Cardiac septum (tissue), 1 donor: ENCODE measurements at regions of chrX and their contacts with region 1.

Region 1: DNA sequence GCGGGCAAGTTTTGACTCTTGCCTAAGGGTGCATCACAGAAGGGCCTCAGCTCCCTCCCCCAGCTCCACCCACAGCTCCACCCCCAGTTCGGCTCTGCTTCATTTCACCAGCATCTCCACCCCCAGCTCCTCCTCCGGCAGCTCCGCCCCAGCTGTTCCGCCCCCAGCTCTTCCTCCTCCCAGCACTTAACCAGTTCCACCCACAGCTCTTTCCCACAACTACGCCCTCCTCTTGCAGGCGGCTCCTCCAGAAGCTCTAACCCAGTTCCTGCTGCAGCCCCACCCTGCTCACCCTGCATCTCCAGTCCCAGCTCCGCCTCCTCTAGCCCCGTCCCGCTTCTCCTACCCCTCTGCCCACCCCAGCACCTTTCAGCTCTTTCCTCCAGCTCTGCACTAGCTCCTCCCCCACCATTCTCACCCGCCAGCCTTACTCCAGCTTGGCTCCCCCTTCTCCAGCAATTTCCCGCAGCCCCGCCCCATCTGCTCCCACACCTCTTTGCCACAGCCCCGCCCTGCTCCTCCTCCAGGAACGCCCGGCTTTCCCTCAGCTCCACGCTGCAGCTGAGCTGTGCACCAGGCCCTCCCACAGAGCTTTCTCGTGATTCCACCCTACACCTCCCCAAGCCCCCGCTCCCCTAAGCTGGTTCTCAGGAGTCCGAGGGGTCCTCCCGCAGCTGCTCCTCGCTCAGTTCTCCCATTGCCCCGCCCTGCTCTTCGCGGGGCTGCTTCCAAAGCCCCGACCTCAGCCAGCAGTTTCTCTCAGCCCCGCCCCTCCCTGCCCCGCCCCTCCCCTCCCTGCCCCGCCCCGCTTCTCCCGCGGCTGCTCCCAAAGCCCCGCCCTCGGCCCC is 1.3 kb upstream of the EOLA1 start:
- DNase-seq: peak; percentile 95

Region 2: DNA sequence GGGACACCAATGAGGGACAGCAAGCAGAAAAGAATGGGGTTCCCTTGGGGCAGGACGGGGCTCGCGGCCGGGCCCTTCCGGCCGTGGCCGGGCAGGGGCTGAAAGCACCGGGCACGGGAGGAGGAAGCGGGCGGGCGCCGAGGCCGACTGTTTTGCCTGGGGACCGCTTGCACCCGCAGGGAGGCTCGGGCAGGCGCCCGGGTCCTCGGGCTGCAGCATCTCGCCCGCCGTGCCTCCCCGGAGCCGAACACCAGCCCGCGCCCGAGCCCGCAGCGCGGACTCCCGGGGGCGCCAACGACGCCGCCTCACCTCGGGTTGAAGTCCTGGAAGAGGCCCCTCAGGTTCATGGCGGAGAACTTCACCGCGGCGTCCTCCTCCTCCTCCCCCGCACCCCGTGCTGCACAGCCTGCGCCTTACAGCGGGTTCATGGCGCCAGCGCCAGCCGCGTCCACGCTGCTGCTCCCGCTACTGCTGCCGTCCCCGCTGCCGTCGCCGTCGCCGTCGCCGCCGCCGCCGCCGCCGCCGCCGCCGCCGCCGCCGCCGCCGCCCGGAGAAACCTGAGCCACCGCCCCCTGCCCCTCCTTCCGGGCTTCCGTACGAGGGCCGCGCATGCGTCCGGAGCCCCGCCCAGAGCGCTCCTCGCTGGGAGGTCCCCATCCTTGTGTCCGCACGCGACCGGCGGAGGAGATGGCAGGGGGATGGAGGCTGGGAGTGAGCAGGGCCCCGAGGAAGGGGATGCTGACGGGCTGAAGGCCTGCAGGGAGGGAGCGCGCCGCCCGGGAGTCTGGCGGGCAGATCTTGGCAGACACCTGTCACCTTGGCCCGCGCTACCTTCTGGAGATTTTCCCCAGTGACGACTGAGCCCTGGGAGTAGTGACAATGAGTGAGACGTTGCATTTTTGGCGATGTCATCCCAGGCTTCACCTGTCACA is 92.0 kb after region 1 on chrX and contains the start of gene TMEM185A:
- intact Hi-C with region 1: loop called (anchors 2 kb)
- DNase-seq: peak; percentile 84
- total RNA-seq, gene TMEM185A: 30.2 TPM

Region 3: DNA sequence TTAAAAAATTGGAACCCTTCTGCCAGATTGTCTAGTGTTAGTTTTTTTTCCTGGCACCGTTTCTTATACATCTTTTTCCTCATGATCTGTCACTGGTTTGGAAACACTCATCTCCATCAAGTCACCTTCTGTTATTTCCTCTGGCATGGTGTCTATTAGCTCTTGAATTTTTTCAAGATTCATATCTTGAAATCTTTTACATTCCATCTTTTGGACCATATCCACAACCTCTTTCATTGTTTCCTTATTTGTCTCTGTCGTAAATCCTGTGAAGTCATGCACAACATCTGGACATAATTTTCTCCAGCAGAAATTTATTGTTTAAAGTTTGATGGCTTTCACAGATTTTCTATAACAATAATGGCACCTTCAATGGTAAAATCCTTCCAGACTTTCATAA is 102.3 kb after region 1 on chrX:
- intact Hi-C with region 1: no loop called
- DNase-seq: no peak

Region 4: GRCh38 chrX:149682031-149682430 is 142.5 kb after region 1 on chrX:
- intact Hi-C with region 1: no loop called
- DNase-seq: no peak

Region 5: DNA sequence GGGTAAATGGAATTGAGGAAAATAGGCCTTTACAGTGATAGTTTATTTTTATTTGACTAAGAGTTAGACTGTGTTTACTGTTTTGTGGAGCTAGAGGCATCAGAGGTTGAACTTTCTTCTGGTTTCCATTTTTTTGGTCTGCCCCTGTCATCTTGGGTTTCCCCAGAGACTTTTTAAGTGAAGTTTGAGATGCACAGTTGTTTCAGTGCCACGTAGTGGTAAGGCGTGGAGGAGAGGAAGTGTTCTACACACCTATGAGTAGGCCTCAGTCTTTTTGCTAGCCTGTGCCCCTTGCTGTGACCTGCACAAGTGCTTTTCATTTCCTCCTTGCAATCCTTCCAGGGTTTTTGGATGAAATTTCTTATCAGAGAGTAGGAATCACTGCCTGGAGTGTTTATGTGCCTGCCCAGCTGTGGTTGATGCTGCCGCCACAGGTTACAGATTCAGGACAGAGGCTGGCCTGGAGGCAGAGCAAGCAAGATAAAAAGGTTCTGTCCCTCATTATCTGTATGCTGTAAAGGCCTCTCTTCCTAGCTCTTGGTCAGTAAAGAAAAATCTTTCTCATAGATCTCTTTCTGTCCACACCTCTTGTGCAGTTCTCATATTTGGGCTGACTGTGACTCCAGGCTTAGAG is 377.4 kb after region 1 on chrX:
- intact Hi-C with region 1: no loop called
- DNase-seq: no peak